A673 (cell line): ENCODE measurements at regions of chr15 and their contacts with region 1.

Region 1: DNA sequence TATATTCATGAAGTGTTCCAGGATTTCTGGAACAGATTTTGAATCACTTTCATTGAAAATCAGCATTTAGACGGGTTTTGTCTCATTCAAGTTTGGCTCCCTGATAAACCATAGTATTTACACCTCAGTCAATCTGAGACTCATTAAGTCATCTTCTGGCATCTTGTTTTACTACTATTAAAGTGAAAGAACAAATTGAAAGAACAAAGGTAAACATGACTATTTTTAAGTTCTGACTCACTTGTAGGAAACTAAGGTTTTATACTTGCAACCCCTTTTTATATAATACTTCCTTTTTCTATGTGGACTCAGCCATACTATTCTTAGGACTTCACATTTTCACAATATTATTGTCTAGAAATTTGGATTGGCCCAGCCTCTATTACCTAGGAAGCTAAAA is 854.4 kb downstream of the SQOR start:
- DNase-seq: no peak
- H3K4me3 ChIP-seq: no peak overlapping the region
- H3K27ac ChIP-seq: no peak overlapping the region
- H3K4me1 ChIP-seq: no peaks in the 10 kb centered on the region
- H3K27me3 ChIP-seq: no peaks in the 10 kb centered on the region
- CTCF ChIP-seq: no peak

Region 2: GRCh38 chr15:46654993-46655392 is 165.7 kb after region 1 on chr15:
- CTCF ChIA-PET with region 1: no interaction called
- POLR2A ChIA-PET with region 1: no interaction called
- intact Hi-C with region 1: loop called (anchors 5 kb)
- DNase-seq: no peak
- H3K4me3 ChIP-seq: no peak overlapping the region
- H3K27ac ChIP-seq: no peak overlapping the region
- H3K4me1 ChIP-seq: no peaks in the 10 kb centered on the region
- H3K27me3 ChIP-seq: no peaks in the 10 kb centered on the region
- CTCF ChIP-seq: no peak